Ascending aorta (tissue), 2 donors: ENCODE measurements at regions of chr11 and their contacts with region 1.

Region 1: DNA sequence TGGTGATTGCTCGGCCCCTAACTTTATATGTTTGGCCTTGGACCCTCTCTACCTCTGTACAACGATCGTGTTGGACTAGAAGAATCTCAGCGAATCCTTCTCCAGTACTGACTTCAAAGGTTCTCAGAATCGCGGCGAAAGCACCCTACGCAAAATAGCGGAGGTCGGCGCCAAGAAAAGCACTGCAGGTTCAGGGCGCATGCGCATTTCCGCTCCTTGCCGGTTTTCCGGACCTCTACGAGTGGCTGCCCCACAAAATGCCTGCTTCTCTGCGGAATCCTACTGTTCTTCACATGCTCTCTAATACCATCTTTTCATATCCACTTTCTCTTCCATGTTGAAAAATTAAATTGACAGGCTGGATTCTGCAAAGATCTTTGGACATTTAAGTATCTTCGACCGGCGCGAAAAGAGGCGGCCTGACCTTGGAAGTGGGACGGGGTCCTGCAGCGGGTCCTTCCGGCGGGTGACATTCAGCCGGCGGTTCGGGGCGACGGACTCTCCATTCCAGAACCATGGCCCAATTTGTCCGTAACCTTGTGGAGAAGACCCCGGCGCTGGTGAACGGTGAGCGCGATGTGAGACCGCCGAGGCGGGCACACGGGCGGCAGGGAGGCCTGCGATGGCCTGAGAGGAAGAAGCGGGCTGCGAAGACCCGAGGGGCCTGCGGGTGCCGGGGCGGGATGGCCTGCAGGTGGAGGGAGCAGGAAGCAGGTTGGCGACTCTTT is at the start of gene ATP5MG:
- DNase-seq: peak; percentile 13 to 93
- H3K4me3 ChIP-seq: peak within 1 kb of the TSS; percentile 81 to 99
- H3K27ac ChIP-seq: peak within 1 kb of the TSS; percentile 69 to 84
- H3K4me1 ChIP-seq: peaks cover 8 to 20% of the 10 kb centered on the region in 2 donors
- H3K27me3 ChIP-seq: no peaks in the 10 kb centered on the region
- CTCF ChIP-seq: peak in 1 of 3 experiments; percentile 17
- total RNA-seq, gene ATP5MG: 23.7 TPM

Region 2: GRCh38 chr11:118380571-118380970 is 20.7 kb before region 1 on chr11:
- intact Hi-C with region 1: no loop called
- DNase-seq: no peak
- H3K4me3 ChIP-seq: no peak overlapping the region
- H3K27ac ChIP-seq: no peak overlapping the region
- H3K4me1 ChIP-seq: no peaks in the 10 kb centered on the region
- H3K27me3 ChIP-seq: no peaks in the 10 kb centered on the region
- CTCF ChIP-seq: no peak

Region 3: GRCh38 chr11:118488480-118489109 is 87.3 kb after region 1 on chr11:
- intact Hi-C with region 1: loop called (anchors 1 kb)
- DNase-seq: peak in 1 of 2 donors; percentile 73
- H3K4me3 ChIP-seq: no peak overlapping the region
- H3K27ac ChIP-seq: no peak overlapping the region
- H3K4me1 ChIP-seq: no peaks in the 10 kb centered on the region
- H3K27me3 ChIP-seq: no peaks in the 10 kb centered on the region
- CTCF ChIP-seq: peak; percentile 51 to 78 (median 74)

Region 4: GRCh38 chr11:118715245-118715831 is 314.0 kb after region 1 on chr11:
- intact Hi-C with region 1: no loop called
- DNase-seq: no peak
- H3K4me3 ChIP-seq: no peak overlapping the region
- H3K27ac ChIP-seq: peak overlapping the region; percentile 15 to 71
- H3K4me1 ChIP-seq: no peaks in the 10 kb centered on the region
- H3K27me3 ChIP-seq: no peaks in the 10 kb centered on the region
- CTCF ChIP-seq: no peak